ENCODE measurements at regions of chr10 and their contacts with region 1.

Region 1: DNA sequence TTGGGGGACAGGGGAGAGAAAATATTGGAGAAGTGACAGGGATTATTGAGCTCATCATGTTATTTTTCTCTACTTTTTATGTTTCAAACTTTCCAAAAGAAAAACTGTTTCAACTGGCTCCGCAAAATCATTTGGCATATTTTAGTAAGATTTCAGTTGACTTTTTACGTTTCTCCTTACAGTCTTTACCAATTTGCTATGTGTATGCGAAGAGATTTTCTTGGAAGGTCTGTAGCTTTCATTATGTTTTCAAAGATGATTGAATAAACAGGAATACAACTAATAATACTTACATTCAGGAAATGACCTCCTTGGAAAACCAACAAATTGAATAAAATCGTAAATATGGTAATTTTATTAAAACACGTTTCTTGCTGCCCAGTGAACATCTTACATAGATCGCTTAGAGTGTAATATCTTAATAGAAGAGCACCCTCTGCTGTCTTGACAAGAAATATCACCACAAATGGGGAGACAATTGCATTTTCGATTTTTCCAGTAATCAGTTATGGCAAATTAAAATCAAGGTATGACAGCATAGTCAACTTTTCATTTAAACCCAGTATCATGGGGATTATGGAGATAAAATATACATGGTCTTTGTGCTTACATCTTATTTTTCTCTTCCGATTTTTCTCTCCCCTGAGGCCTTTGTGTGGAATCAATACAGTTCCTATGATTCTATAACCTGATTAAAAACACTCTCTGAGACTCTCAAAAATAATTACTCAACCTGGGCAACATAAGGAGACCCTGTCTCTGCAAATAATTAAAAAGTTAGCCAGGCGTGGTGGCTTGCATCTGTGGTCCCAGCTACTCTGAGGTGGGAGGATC is 43.1 kb downstream of the MBL2 start:
- DNase-seq: no peak
- H3K4me3 ChIP-seq: no peak overlapping the region
- H3K27ac ChIP-seq: no peak overlapping the region
- H3K4me1 ChIP-seq: no peaks in the 10 kb centered on the region
- H3K27me3 ChIP-seq: no peaks in the 10 kb centered on the region
- CTCF ChIP-seq: peak in 2 of 3 experiments; percentile 23 to 40

Region 2: GRCh38 chr10:52644373-52645186 is 84.9 kb before region 1 on chr10:
- intact Hi-C with region 1: loop called (anchors 5 kb)
- DNase-seq: no peak
- H3K4me3 ChIP-seq: no peak overlapping the region
- H3K27ac ChIP-seq: no peak overlapping the region
- H3K4me1 ChIP-seq: no peaks in the 10 kb centered on the region
- H3K27me3 ChIP-seq: no peaks in the 10 kb centered on the region
- CTCF ChIP-seq: peak; percentile 21 to 57 (median 43)

Measured in ascending aorta (tissue), 2 donors.